ENCODE measurements at regions of chr1 and their contacts with region 1.

Region 1: GRCh38 chr1:175129997-175130648 is 62.5 kb downstream of the KIAA0040 start:
- DNase-seq: peak; percentile 17
- ATAC-seq: no peak
- H3K4me3 ChIP-seq: no peak overlapping the region
- H3K27ac ChIP-seq: no peak overlapping the region
- H3K4me1 ChIP-seq: no peaks in the 10 kb centered on the region
- H3K27me3 ChIP-seq: no peaks in the 10 kb centered on the region
- CTCF ChIP-seq: 0 out of 2 replicates have a peak, but pooled peaks have one; percentile 22

Region 2: DNA sequence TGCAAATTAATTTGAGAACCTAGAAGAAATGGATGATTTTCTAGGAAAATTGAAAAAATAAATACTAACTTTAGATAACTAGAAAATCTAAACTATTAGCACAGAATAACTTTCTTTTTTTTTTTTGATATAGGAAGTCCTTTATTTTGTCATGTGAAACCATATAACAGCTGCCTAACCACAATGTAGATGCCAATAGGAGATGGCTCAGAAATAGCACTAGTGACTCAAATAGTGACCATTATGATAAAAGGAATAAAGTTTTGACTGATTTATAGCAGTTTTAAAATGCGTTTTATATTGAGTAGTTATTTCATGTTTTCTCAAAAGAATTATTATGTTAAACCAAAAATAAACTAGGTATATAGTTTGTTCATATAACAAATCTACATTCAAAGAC is 288.4 kb before region 1 on chr1:
- CTCF ChIA-PET with region 1: interaction called, 11 read pairs
- POLR2A ChIA-PET with region 1: no interaction called
- intact Hi-C with region 1: no loop called
- DNase-seq: no peak
- ATAC-seq: no peak
- H3K4me3 ChIP-seq: no peak overlapping the region
- H3K27ac ChIP-seq: no peak overlapping the region
- H3K4me1 ChIP-seq: no peaks in the 10 kb centered on the region
- H3K27me3 ChIP-seq: no peaks in the 10 kb centered on the region
- CTCF ChIP-seq: no peak

Measured in PC-3 (cell line).